ENCODE measurements at regions of chr10 and their contacts with region 1.

Region 1: GRCh38 chr10:101353692-101354327 is at the start of gene BTRC:
- DNase-seq: peak; percentile 99
- ATAC-seq: peak; percentile 99
- H3K4me3 ChIP-seq: peak within 1 kb of the TSS; percentile 70 to 77
- H3K27ac ChIP-seq: peak within 1 kb of the TSS; percentile 79
- H3K4me1 ChIP-seq: peaks cover 9% of the 10 kb centered on the region; the same call in 1 of the 2 replicates
- H3K27me3 ChIP-seq: no peaks in the 10 kb centered on the region
- CTCF ChIP-seq: no peak
- total RNA-seq, gene BTRC: 22.1 TPM

Region 2: DNA sequence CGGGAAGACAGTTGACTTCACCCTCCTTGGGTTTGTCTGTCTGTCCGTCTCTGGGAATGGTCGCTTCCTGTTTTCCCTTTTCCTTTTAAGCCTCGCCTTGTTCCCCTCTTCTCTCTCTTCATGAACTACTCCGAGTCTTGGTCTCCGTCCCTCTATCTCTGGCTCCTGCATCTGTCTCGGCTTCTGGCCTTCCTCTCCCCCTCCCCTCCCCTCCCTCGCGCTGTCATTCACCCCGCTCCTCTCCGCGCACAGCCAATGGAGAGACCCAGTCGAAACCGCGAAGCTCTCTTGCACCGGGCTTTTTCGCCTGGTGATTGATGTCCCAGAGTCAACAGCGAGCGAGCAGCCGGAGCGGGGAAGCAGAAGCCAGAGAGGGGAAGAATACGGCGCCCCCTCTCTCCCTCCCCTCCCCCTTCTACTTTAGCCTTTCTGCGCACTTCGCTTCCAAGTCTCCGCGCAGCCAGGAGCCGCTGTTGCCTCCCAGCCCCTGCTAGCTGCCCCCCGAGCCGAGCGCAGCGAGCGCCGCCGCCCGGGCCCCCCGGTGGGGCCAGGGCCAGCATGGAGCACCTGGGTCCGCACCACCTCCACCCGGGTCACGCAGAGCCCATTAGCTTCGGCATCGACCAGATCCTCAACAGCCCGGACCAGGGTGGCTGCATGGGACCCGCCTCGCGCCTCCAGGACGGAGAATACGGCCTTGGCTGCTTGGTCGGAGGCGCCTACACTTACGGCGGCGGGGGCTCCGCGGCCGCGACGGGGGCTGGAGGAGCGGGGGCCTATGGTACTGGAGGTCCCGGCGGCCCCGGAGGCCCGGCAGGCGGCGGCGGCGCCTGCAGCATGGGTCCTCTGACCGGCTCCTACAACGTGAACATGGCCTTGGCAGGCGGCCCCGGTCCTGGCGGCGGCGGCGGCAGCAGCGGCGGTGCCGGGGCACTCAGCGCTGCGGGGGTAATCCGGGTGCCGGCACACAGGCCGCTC is 222.5 kb before region 1 on chr10 and contains the start of gene TLX1:
- CTCF ChIA-PET with region 1: no interaction called
- POLR2A ChIA-PET with region 1: no interaction called
- in situ Hi-C with region 1: no loop called
- intact Hi-C with region 1: no loop called
- DNase-seq: no peak
- ATAC-seq: peak; percentile 57
- H3K4me3 ChIP-seq: peak within 1 kb of the TSS; percentile 37 to 45
- H3K27ac ChIP-seq: no peak within 1 kb of the TSS
- H3K4me1 ChIP-seq: no peaks in the 10 kb centered on the region; the same call in 1 of the 2 replicates
- H3K27me3 ChIP-seq: peaks cover 23% of the 10 kb centered on the region
- CTCF ChIP-seq: no peak
- total RNA-seq, gene TLX1: 0.13 TPM

Region 3: DNA sequence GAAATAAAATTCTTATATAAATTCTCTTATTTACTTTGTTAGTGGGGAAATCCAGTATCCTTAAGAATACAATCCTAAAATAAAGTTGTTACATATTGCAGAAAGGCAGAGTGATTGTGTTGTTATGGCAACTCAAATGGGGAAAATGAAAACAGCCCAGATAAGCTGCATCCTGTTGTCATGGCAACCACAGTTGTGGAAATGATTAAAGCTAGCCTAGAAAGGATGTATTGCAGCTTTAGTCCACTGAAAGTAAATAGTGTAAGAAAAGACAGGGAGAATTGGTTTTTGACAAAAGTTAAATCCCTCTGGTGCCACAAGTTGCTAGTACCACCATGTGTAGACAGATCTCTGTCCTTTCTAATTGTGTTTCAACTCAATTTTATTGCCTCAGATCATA is 43.3 kb after region 1 on chr10:
- CTCF ChIA-PET with region 1: no interaction called
- POLR2A ChIA-PET with region 1: interaction called, 10 read pairs
- in situ Hi-C with region 1: no loop called
- intact Hi-C with region 1: no loop called
- DNase-seq: no peak
- ATAC-seq: no peak
- H3K4me3 ChIP-seq: no peak overlapping the region
- H3K27ac ChIP-seq: no peak overlapping the region
- H3K4me1 ChIP-seq: no peaks in the 10 kb centered on the region; the same call in 1 of the 2 replicates
- H3K27me3 ChIP-seq: no peaks in the 10 kb centered on the region
- CTCF ChIP-seq: no peak

Region 4: DNA sequence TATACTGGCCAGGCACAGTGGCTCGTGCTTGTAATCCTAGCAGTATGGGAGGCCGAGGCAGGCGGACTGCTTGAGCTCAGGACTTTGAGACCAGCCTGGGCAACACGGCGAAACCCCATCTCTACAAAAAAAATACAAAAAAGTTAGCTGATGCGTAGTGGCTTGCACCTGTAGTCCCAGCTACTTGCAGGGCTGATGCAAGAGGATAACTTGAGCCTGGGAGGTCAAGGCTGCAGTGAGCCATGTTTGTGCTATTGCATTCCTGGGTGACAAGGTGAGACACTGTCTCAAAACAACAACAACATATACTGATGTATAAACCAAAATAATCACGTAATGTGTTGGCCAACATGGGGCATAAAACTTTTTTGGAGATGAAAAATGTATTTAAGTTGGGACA is 435.9 kb after region 1 on chr10:
- CTCF ChIA-PET with region 1: no interaction called
- POLR2A ChIA-PET with region 1: interaction called, 19 read pairs
- in situ Hi-C with region 1: no loop called
- intact Hi-C with region 1: no loop called
- DNase-seq: no peak
- ATAC-seq: no peak
- H3K4me3 ChIP-seq: no peak overlapping the region
- H3K27ac ChIP-seq: no peak overlapping the region
- H3K4me1 ChIP-seq: peaks cover 9% of the 10 kb centered on the region
- H3K27me3 ChIP-seq: no peaks in the 10 kb centered on the region
- CTCF ChIP-seq: no peak

Measured in Panc1 (cell line).